Common myeloid progenitor, CD34-positive (primary cell): ENCODE measurements at regions of chr1 and their contacts with region 1.

Region 1: GRCh38 chr1:20640183-20640597 is 6.9 kb downstream of the PINK1 start:
- DNase-seq: peak; percentile 73 to 86 (median 80)
- H3K4me3 ChIP-seq: no peak overlapping the region
- H3K27ac ChIP-seq: no peak overlapping the region
- H3K4me1 ChIP-seq: no peaks in the 10 kb centered on the region
- H3K27me3 ChIP-seq: no peaks in the 10 kb centered on the region

Region 2: DNA sequence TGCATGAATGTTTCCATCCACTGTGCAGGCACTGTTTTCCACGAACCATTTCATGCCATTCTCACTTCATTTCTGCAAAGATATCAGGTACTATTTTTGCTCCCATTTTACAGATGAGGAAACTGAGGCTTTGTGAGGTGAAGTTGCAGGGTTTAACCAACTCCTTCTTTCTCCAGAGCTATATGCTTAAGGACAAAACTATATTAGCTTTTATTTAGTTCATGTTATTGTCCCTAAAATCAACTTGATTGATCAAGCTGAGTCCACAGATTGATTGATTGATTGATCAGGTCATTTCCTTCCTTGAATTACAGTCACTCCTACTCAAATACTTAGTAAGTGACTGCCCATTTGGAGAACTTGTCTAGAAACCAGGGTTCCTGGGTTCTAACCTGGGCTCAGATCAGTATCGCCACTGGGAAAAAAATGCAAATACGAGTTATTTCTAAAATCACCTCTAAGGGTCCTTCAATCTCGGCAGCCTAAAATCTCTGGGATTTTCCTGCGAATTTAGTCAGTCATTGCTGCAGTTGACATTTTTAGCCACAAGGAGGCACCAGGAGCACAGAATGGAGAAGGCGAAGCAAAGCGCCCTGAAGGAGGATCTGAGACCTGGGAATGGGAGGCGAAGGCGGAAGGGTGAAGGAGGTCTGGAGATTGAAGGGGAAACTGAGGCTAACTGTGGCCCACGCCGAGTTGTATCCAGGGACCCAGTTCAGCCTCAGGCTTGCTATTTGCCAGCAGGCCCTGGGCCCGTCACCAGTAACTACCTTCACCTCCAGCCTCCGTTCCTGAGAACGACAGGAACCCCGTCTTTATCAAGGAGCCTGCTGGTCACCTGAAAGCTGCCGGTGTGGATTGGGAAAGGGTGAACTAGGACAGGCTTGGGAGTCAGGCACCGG is 118.0 kb before region 1 on chr1:
- CTCF ChIA-PET with region 1: interaction called, 33 read pairs
- POLR2A ChIA-PET with region 1: no interaction called
- DNase-seq: peak; percentile 79 to 88 (median 84)
- H3K4me3 ChIP-seq: no peak overlapping the region
- H3K27ac ChIP-seq: no peak overlapping the region
- H3K4me1 ChIP-seq: no peaks in the 10 kb centered on the region
- H3K27me3 ChIP-seq: peaks cover 0 to 9% (median 3%) of the 10 kb centered on the region in 5 experiments

Region 3: GRCh38 chr1:20574686-20575540 is 65.3 kb before region 1 on chr1:
- CTCF ChIA-PET with region 1: interaction called, 44 read pairs
- POLR2A ChIA-PET with region 1: no interaction called
- DNase-seq: peak; percentile 87 to 93 (median 90)
- H3K4me3 ChIP-seq: no peak overlapping the region
- H3K27ac ChIP-seq: no peak overlapping the region
- H3K4me1 ChIP-seq: peaks cover 0 to 2% (median 0%) of the 10 kb centered on the region in 4 experiments
- H3K27me3 ChIP-seq: peaks cover 0 to 18% (median 2%) of the 10 kb centered on the region in 5 experiments

Region 4: DNA sequence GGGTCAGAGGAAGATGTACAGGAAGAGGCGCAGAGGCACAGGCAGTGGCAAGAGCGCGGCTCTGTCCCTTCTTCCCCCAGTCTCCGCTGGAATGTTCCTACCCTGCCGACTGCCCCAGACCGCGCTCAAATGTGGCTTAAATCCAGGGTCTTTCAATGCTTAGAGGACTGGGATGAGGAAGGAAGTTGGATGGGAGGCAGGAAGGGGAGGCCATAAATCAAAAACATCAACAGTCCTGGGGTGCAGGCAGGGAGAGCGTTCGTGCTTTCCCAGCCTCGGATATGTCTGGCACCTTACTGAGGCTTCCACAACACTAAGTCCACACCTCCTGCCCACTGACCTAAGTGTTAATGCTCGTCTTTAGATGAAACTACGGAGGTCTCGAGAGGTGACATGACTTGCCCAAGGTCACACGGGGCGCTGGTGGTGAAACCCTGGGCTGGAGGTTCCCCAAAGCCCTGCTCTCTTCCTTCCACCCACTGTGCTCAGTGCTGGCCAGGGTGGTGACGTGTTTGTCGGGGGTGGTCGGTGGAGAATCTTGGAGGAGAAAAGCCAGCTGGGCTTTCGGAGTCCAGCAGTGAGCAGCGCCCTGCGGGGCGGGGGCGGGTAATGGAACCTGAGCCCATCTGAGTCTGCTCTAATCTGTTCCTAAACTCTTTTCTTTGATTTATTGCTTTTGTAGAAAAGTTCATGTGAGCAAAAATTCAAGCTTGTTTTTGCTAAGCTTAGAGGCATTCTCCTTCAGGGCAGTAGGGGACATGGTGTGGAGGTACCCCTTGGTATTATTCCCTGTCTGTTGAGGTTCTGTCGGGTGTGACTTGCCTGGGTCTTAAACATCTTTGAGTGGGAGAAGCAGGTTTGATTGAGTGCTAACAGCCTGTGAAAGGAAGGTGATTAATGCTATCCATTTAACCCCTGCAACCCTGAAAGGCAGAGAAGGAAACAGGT is 50.6 kb before region 1 on chr1:
- CTCF ChIA-PET with region 1: interaction called, 11 read pairs
- POLR2A ChIA-PET with region 1: no interaction called
- DNase-seq: peak in 1 of 3 donors; percentile 40
- H3K4me3 ChIP-seq: peak overlapping the region in 5 of 7 experiments; percentile 33 to 65 (median 57)
- H3K27ac ChIP-seq: no peak overlapping the region
- H3K4me1 ChIP-seq: peaks cover 2 to 32% (median 29%) of the 10 kb centered on the region in 4 experiments
- H3K27me3 ChIP-seq: peaks cover 0 to 26% (median 9%) of the 10 kb centered on the region in 5 experiments

Region 5: GRCh38 chr1:20609541-20609940 is 30.6 kb before region 1 on chr1:
- CTCF ChIA-PET with region 1: no interaction called
- POLR2A ChIA-PET with region 1: no interaction called
- DNase-seq: no peak
- H3K4me3 ChIP-seq: no peak overlapping the region
- H3K27ac ChIP-seq: no peak overlapping the region
- H3K4me1 ChIP-seq: peaks cover 0 to 6% (median 2%) of the 10 kb centered on the region in 4 experiments
- H3K27me3 ChIP-seq: no peaks in the 10 kb centered on the region

Region 6: DNA sequence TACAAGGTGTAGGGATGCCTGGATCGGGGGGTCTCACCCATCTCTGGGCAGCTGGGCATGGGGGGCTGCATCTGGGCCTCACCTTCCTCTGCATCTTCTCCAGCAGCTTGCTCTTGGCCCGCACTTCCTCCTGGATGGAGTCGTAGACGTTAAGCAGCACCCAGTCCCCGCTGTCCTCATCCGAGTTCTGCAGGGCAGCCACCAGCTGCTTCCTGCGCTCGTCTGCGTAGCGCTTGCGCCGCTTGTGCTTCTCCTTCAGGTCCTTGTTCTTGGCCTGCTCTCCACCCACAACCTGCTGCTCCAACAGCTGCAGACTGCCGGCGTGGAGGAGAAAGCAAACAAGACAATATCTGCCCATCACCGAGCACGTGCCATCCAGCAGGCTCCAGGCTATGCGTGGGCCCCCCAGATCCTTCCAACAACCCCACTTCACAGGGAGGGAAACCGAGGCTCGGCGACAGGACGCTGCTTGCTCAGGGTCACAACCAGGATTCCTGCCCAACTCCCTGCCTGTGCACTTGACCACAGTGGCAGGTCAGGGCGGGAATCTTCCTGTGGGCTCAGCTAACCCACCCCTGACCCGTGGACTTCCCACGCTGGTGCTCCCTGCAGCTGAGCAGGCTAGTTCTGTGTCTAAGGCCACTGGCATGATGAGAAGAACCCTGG is 42.5 kb after region 1 on chr1:
- CTCF ChIA-PET with region 1: no interaction called
- POLR2A ChIA-PET with region 1: no interaction called
- DNase-seq: peak in 2 of 3 donors; percentile 83 to 91
- H3K4me3 ChIP-seq: peak overlapping the region in 2 of 7 experiments; percentile 3 to 4
- H3K27ac ChIP-seq: no peak overlapping the region
- H3K4me1 ChIP-seq: peaks cover 0 to 12% (median 10%) of the 10 kb centered on the region in 4 experiments
- H3K27me3 ChIP-seq: no peaks in the 10 kb centered on the region

Region 7: GRCh38 chr1:20837554-20838192 is 197.5 kb after region 1 on chr1:
- CTCF ChIA-PET with region 1: no interaction called
- POLR2A ChIA-PET with region 1: no interaction called
- DNase-seq: no peak
- H3K4me3 ChIP-seq: no peak overlapping the region
- H3K27ac ChIP-seq: no peak overlapping the region
- H3K4me1 ChIP-seq: no peaks in the 10 kb centered on the region
- H3K27me3 ChIP-seq: no peaks in the 10 kb centered on the region